Prostate gland (tissue), 2 donors: ENCODE measurements at regions of chr17 and their contacts with region 1.

Region 1: DNA sequence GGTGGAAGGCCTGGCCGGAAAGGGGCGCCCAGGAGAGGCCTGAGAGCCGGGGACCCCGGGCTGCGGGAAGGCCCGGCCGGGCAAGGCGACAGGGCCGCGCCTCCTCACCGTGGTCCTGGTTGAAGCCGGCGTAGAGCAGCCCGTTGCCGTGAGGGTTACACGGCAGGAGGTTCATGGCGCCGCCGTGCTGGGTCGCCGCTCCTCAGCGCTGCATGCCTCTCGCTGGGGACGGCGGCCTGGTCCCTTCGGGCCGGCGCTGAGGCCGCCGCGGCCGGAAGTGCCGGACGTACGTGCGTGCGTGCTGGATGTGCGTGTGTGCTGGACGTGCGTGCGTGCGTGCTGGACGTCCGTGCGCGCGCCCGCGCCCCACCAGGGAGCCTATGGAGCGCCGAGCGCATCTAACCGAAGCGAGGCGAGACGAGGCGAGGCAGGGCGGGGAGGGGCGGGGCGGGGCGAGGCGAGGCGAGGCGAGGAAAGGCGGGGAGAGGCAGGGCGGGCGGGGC is at the start of gene WDR45B:
- DNase-seq: peak; percentile 94
- H3K4me3 ChIP-seq: peak within 1 kb of the TSS; percentile 92 to 100
- H3K27ac ChIP-seq: peak within 1 kb of the TSS; percentile 94 to 99
- H3K4me1 ChIP-seq: no peaks in the 10 kb centered on the region
- H3K27me3 ChIP-seq: no peaks in the 10 kb centered on the region
- CTCF ChIP-seq: peak in 1 of 4 experiments; percentile 16
- POLR2A ChIP-seq: peak; percentile 98
- total RNA-seq, gene WDR45B: 97.8 to 146 TPM

Region 2: GRCh38 chr17:82698065-82698973 is 50.1 kb after region 1 on chr17 and contains the start of gene RAB40B:
- intact Hi-C with region 1: loop called (anchors 2 kb)
- DNase-seq: peak; percentile 100
- H3K4me3 ChIP-seq: peak within 1 kb of the TSS; percentile 76 to 83
- H3K27ac ChIP-seq: peak within 1 kb of the TSS; percentile 67 to 69
- H3K4me1 ChIP-seq: peaks cover 12% of the 10 kb centered on the region
- H3K27me3 ChIP-seq: no peaks in the 10 kb centered on the region
- CTCF ChIP-seq: no peak
- POLR2A ChIP-seq: peak; percentile 81
- total RNA-seq, gene RAB40B: 23.8 to 34.9 TPM

Region 3: GRCh38 chr17:82751571-82752370 is 103.6 kb after region 1 on chr17 and contains the start of gene TBCD:
- intact Hi-C with region 1: loop called (anchors 5 kb)
- DNase-seq: peak; percentile 88
- H3K4me3 ChIP-seq: peak within 1 kb of the TSS; percentile 89 to 92
- H3K27ac ChIP-seq: peak within 1 kb of the TSS; percentile 73 to 85
- H3K4me1 ChIP-seq: peaks cover 4% of the 10 kb centered on the region
- H3K27me3 ChIP-seq: no peaks in the 10 kb centered on the region
- CTCF ChIP-seq: peak in 1 of 4 experiments; percentile 5
- POLR2A ChIP-seq: peak; percentile 77
- total RNA-seq, gene TBCD: 64.0 to 123 TPM

Region 4: DNA sequence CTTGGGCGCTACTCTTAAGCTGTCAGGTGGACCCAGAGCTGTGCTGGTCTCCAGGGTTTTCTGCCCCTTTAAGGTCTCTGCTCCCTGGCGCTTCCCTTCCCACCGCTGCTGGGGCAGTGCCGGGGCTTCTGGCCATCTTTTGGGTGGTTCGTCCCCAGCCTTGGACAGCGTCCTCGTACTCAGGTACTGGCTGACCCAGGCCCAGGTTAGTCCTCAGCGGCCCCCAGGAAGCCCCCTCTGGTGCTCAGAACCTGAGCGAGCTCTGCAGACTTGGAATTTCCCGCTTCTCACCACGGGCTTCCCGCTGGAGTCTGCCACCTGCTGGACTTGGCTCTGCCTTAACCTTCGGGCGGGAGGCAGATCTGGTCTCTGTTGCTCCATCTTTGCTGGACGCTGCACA is 285.7 kb after region 1 on chr17:
- intact Hi-C with region 1: no loop called
- DNase-seq: no peak
- H3K4me3 ChIP-seq: no peak overlapping the region
- H3K27ac ChIP-seq: no peak overlapping the region
- H3K4me1 ChIP-seq: no peaks in the 10 kb centered on the region
- H3K27me3 ChIP-seq: no peaks in the 10 kb centered on the region
- CTCF ChIP-seq: no peak
- POLR2A ChIP-seq: no peak